ENCODE measurements at regions of chr2 and their contacts with region 1.

Region 1: DNA sequence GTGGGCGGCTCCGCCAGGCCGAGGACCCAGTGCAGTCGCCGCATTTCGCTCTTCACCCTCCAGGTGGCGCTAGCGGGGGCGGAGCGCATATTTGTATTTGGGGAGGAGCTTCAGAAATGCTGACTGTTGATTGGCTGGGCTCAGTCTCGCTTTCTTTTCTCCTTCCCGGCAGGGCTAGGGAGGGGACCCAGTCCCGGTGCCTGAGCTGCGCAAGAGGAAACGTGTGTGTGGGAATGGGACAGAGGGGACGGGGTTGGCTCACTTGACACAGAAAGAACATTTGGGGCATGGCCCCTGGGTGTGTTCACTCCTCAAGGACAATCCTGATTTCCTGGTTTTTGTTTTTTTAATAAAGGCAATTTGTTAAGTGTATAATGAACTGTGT is 20.3 kb upstream of the DNMT3A start:
- DNase-seq: peak; percentile 96
- ATAC-seq: peak; percentile 98
- H3K4me3 Mint-ChIP-seq: peak overlapping the region; percentile 83
- H3K27ac Mint-ChIP-seq: peak overlapping the region; percentile 93
- H3K4me1 Mint-ChIP-seq: peaks cover 15% of the 10 kb centered on the region
- H3K27me3 Mint-ChIP-seq: no peaks in the 10 kb centered on the region

Region 2: GRCh38 chr2:25286025-25286400 is 76.0 kb before region 1 on chr2:
- CTCF ChIA-PET with region 1: interaction called, 17 read pairs
- DNase-seq: peak; percentile 92
- ATAC-seq: peak; percentile 100
- H3K4me3 Mint-ChIP-seq: peak overlapping the region; percentile 61
- H3K27ac Mint-ChIP-seq: peak overlapping the region; percentile 98
- H3K4me1 Mint-ChIP-seq: peaks cover 36% of the 10 kb centered on the region
- H3K27me3 Mint-ChIP-seq: no peaks in the 10 kb centered on the region

Region 3: DNA sequence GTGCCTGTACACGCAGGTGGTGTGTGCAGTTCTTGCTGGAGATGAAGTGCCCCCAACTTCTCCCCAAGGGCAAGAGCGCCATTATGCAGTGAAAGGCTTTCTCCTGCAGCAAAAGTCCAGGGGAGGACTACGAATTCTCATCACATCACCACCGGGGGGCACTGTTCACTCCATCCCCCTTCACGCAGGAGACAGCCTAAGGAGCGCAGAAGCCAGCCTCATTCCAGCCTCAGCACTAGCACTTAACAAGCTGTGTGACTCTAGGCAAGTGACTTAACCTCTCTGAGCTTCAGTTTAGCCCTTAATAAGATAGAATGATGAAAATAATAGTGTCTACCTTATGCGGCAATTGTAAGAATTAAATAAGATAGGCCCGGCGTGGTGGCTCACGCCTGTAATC is 52.6 kb before region 1 on chr2:
- CTCF ChIA-PET with region 1: interaction called, 16 read pairs
- DNase-seq: peak; percentile 77
- ATAC-seq: peak; percentile 38
- H3K4me3 Mint-ChIP-seq: no peak overlapping the region
- H3K27ac Mint-ChIP-seq: no peak overlapping the region
- H3K4me1 Mint-ChIP-seq: peaks cover 68% of the 10 kb centered on the region
- H3K27me3 Mint-ChIP-seq: no peaks in the 10 kb centered on the region

Region 4: DNA sequence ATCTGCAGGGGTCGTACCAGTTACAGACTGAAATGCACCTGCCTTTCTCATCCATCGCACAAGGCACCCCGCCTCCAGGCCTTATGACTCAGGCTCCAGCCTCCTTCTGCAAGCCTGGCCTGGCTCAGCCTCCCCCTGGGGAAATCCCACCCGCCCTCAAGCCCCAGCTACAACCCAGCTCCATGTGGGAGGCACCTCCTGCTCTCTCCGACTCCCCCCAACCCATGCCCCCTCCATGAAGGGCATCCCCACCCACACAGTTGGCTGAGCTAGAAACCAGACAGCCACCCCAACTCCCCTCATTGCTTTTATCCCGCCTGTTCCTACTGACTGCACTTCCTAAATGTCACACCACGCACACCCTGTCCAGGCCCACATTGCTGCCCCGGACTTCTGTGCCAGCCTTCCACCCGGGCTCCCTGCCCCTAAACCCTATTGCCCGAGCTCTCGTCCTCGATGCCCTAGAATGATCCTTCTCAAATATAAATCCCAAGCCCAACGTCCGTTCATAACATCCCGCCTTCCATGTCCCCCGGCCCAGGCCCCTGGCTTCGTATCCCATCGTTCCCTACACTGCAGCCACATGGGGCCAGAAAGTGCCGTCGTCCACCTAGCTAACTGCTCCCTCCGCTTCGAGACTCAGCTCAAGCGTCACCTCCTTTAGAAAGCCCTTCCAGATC is 30.2 kb before region 1 on chr2:
- CTCF ChIA-PET with region 1: interaction called, 11 read pairs
- DNase-seq: no peak
- ATAC-seq: no peak
- H3K4me3 Mint-ChIP-seq: no peak overlapping the region
- H3K27ac Mint-ChIP-seq: no peak overlapping the region
- H3K4me1 Mint-ChIP-seq: peaks cover 38% of the 10 kb centered on the region
- H3K27me3 Mint-ChIP-seq: no peaks in the 10 kb centered on the region

Region 5: GRCh38 chr2:25376750-25377621 is 14.9 kb after region 1 on chr2:
- CTCF ChIA-PET with region 1: interaction called, 109 read pairs
- DNase-seq: peak; percentile 97
- ATAC-seq: peak; percentile 100
- H3K4me3 Mint-ChIP-seq: peak overlapping the region; percentile 67
- H3K27ac Mint-ChIP-seq: peak overlapping the region; percentile 98
- H3K4me1 Mint-ChIP-seq: peaks cover 31% of the 10 kb centered on the region
- H3K27me3 Mint-ChIP-seq: no peaks in the 10 kb centered on the region

Region 6: GRCh38 chr2:25453199-25453905 is 91.3 kb after region 1 on chr2:
- CTCF ChIA-PET with region 1: interaction called, 11 read pairs
- DNase-seq: peak; percentile 65
- ATAC-seq: peak; percentile 98
- H3K4me3 Mint-ChIP-seq: peak overlapping the region; percentile 33
- H3K27ac Mint-ChIP-seq: peak overlapping the region; percentile 93
- H3K4me1 Mint-ChIP-seq: peaks cover 29% of the 10 kb centered on the region
- H3K27me3 Mint-ChIP-seq: no peaks in the 10 kb centered on the region

Region 7: GRCh38 chr2:25567406-25567805 is 205.4 kb after region 1 on chr2:
- CTCF ChIA-PET with region 1: interaction called, 19 read pairs
- DNase-seq: no peak
- ATAC-seq: peak; percentile 81
- H3K4me3 Mint-ChIP-seq: no peak overlapping the region
- H3K27ac Mint-ChIP-seq: peak overlapping the region; percentile 82
- H3K4me1 Mint-ChIP-seq: peaks cover 19% of the 10 kb centered on the region
- H3K27me3 Mint-ChIP-seq: no peaks in the 10 kb centered on the region